Cardiac septum (tissue), 1 donor: ENCODE measurements at regions of chr2 and their contacts with region 1.

Region 1: DNA sequence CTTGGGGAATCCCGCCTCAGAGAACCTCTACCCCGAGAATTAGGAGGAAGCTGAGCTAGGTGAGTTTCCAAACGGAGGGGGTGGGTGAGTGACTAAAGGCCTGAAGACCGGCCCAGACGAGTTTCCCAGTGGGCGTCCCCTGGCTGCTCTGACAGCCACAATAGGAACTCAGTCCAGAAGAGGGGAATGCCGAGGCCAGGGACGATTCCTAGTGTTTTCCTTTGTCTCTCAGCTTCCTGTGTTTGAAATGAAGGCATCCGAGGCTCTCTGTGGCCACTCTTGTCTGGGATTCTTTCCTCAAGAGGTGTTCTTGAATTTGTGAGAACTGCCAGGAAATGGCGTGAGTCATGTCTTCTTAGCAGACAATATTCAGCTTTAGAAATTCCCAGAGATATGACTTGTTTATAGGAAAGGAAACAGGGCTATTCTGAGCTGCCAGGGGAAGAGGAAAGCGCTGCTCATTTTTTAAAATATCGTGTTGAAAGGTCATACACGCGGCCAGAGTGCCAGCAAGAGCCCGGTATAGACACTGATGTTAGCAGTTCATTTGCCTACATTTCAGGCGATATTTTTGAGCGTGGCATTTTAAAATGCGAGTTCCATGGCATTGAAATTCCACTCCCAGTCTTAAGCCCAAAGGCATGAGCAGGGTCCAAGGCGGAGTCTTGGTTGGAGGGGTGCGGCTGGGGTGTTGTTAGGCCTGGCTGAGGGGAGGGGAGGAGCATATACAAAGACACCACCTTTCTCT is 169.1 kb upstream of the KLF7 start:
- DNase-seq: peak; percentile 89

Region 2: GRCh38 chr2:206800506-206801417 is 534.0 kb before region 1 on chr2:
- intact Hi-C with region 1: loop called (anchors 10 kb)
- DNase-seq: no peak

Region 3: DNA sequence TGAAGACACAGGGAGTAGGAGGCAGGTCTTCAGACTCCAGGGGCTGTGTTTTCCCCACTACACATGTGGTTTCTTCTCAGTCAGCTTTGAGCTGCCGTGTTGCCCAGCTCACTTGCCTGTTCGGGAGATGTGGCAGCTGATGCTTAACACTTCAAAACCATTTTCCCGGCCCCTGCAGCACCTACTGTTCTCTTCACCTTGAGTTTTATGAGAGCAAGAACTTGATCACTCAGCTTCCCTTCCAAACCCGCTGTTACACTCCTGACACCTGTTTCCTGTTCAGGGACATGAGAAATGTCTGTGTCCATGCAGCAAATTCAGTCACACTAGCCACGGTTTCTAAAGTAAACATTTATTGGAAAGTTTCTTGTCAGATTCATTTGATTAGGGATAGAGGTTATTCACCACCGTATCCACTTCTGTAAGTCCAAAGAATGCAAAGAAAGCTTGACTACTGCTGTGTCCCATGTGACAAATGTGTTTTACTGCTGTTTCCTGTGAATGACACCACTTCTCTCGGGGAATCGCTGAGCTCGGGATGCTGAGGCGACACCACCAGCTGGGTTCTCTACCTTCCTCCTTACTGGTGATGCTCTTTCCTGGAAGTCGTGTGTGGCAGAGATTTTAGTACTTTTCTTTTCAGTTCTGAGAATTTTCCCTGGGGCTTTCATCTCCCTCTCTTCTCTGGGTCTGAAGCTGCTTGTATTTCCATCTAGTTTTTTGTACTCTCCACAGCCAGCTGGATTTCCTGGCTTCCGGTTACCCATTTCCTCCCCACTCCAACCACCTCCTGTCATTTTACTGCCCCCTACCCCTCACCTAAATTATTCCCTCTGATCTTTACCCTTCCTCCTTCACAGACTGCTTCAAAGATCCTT is 260.8 kb before region 1 on chr2:
- intact Hi-C with region 1: no loop called
- DNase-seq: no peak

Region 4: GRCh38 chr2:207091176-207091575 is 243.6 kb before region 1 on chr2:
- intact Hi-C with region 1: loop called (anchors 5 kb)
- DNase-seq: no peak

Region 5: DNA sequence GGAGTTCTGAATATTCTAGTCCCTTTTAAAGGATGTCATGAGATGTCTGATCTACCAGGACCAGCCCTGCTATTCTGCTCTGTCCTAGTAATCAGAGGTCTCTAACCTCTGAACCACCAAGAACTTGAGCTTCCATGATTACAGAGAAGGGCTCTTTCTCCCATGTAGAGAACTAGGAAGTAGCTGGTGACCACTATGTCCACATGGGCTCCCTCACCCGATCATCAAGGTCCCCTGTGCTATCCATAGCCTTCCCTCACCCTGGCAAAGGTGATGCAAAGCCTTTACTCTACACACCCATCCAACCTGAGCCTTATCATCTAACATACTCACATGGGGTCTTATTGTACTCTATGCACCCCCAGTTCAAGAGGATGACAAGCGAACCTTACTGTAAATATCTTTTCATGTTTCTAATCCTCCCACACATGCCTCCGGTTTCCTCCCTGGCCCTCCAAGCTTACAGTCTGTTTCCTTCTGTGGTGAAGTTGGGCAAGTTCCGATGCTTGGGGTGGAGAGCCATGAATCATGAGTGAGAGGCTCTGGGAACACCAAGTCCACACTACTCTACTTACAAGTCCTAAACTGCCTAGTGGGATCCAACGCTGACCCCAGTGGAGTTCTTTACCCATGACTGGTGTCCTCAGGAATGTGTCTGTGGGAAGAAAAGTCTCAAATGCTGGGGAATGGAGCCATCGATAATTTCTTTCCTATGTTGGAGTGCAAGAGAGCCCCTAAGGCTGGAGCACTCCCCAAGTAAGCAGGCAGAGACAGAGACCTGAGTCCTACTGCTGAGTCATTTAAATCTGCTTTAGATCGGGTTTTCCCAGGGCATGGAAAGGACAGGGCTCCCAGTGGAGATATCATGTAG is 95.7 kb before region 1 on chr2:
- intact Hi-C with region 1: loop called (anchors 5 kb)
- DNase-seq: peak; percentile 80

Region 6: DNA sequence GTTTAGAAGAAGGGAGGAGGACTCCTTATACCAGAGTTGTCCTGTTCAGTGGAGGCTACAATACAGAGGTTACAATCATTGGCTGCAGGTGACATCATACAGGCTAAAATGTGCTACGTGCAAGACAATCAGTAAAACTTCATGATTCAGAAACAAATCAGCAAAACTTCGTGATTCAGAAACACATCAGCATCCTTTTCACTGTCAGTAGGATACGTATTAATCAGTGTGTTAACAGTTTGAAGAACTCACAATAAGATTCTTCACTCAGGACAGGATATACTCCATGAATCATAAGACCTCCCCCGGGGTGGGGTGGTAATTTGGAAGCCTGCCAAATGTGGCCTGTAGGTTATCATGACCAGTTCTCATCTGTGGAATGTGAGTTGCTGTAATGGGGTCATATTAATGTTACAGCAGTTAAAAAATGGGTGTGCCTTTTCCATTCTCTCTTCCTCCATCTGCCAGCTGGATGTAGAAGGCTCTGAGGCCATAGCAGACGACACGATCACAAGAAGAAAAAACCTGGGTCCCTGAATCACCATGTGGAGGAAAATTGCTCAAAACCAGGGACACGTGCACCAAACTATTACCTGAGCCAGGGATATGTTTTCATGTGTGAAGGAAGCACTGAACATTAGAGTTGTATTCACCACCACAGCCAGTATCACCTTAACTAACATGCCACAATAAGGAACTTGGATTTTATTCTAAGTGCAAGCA is 60.2 kb after region 1 on chr2:
- intact Hi-C with region 1: loop called (anchors 2 kb)
- DNase-seq: no peak

Region 7: GRCh38 chr2:207473049-207473930 is 138.5 kb after region 1 on chr2:
- intact Hi-C with region 1: loop called (anchors 5 kb)
- DNase-seq: no peak

Region 8: DNA sequence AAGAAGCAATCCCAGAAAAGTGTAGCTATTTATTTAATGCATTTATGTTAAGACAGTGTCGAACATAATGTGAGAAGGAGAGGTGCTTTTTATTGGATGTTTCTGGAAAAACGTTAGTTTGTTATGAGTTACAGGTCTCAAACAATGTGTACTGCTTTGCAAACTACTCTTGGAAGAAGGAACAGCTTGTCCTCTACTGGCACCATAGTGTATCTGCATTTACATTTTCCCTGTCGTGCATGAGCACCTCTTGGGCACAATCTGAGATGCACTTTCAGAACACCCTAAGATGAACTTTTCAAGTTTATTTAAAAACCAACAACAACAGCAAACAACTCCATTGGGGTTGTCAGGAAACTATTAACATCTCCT is 399.5 kb after region 1 on chr2:
- intact Hi-C with region 1: no loop called
- DNase-seq: no peak